ENCODE measurements at regions of chrX and their contacts with region 1.

Region 1: GRCh38 chrX:37825209-37825842 is 22.0 kb downstream of the DYNLT3 start:
- DNase-seq: peak; percentile 64
- H3K4me3 ChIP-seq: no peak overlapping the region
- H3K27ac ChIP-seq: no peak overlapping the region
- H3K4me1 ChIP-seq: peaks cover 0 to 6% (median 0%) of the 10 kb centered on the region in 4 donors
- H3K27me3 ChIP-seq: no peaks in the 10 kb centered on the region
- CTCF ChIP-seq: peak; percentile 66 to 83 (median 76)
- EP300 ChIP-seq: no peak
- POLR2A ChIP-seq: no peak

Region 2: GRCh38 chrX:37509349-37509748 is 316.0 kb before region 1 on chrX:
- intact Hi-C with region 1: loop called (anchors 1 kb)
- DNase-seq: no peak
- H3K4me3 ChIP-seq: no peak overlapping the region
- H3K27ac ChIP-seq: no peak overlapping the region
- H3K4me1 ChIP-seq: no peaks in the 10 kb centered on the region
- H3K27me3 ChIP-seq: no peaks in the 10 kb centered on the region
- CTCF ChIP-seq: peak in 2 of 4 experiments; percentile 12 to 38
- EP300 ChIP-seq: no peak
- POLR2A ChIP-seq: no peak

Region 3: GRCh38 chrX:37578045-37578444 is 247.3 kb before region 1 on chrX:
- intact Hi-C with region 1: loop called (anchors 2 kb)
- DNase-seq: no peak
- H3K4me3 ChIP-seq: no peak overlapping the region
- H3K27ac ChIP-seq: peak overlapping the region; percentile 33 to 68 (median 56)
- H3K4me1 ChIP-seq: no peaks in the 10 kb centered on the region
- H3K27me3 ChIP-seq: no peaks in the 10 kb centered on the region
- CTCF ChIP-seq: no peak
- EP300 ChIP-seq: no peak
- POLR2A ChIP-seq: no peak

Region 4: DNA sequence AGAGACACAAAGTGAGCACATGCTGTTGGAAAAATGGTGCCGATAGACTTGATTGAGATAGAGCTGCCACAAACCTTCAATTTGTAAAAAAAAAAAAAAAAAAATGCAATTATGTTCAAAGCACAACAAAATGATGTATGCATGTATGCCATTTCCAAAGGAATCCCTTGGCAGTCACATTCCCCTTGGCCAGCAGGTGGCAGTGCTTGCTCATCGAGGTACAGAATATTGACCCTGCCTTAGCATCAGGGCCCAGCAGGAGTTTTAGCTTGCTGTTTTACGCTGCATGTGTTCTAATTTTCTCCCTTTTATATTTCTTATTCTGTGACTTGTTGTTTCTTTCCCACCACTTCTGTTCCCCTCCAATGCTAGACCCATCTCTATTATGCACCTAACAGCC is 80.0 kb before region 1 on chrX:
- intact Hi-C with region 1: loop called (anchors 2 kb)
- DNase-seq: peak; percentile 76
- H3K4me3 ChIP-seq: no peak overlapping the region
- H3K27ac ChIP-seq: no peak overlapping the region
- H3K4me1 ChIP-seq: no peaks in the 10 kb centered on the region
- H3K27me3 ChIP-seq: no peaks in the 10 kb centered on the region
- CTCF ChIP-seq: peak; percentile 46 to 75 (median 56)
- EP300 ChIP-seq: no peak
- POLR2A ChIP-seq: no peak

Region 5: DNA sequence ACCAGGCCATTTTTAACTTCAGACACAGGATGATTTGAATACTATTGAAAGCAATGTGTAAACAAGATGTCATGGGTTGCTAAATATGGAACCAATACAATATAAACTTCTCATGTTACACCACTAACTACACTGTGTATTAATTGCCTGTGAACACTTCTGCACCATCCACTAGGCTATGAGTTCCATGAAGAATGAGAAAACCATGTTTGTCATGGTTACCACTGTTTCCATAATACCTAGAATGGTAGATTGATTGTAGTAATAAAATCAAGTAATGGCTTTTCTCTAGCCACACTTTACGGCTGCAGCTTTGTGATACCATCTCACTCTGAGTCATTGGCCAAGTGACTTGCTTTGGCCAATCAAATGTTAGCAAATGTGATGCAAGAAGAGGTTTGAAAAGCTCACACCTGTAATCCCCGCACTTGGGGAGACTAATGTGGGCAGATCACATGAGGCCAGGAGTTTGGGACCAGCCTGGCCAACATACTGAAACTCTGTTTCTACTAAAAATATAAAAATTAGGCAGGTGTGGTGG is 65.4 kb before region 1 on chrX:
- intact Hi-C with region 1: no loop called
- DNase-seq: no peak
- H3K4me3 ChIP-seq: no peak overlapping the region
- H3K27ac ChIP-seq: no peak overlapping the region
- H3K4me1 ChIP-seq: no peaks in the 10 kb centered on the region
- H3K27me3 ChIP-seq: no peaks in the 10 kb centered on the region
- CTCF ChIP-seq: no peak
- EP300 ChIP-seq: no peak
- POLR2A ChIP-seq: no peak

Region 6: GRCh38 chrX:38327007-38327774 is 501.9 kb after region 1 on chrX and contains the start of gene RPGR:
- intact Hi-C with region 1: no loop called
- DNase-seq: peak; percentile 97
- H3K4me3 ChIP-seq: peak within 1 kb of the TSS; percentile 48 to 68 (median 64)
- H3K27ac ChIP-seq: peak within 1 kb of the TSS; percentile 83 to 92 (median 86)
- H3K4me1 ChIP-seq: peaks cover 0 to 10% (median 0%) of the 10 kb centered on the region in 4 donors
- H3K27me3 ChIP-seq: peaks cover 0 to 3% (median 0%) of the 10 kb centered on the region in 3 donors
- CTCF ChIP-seq: peak; percentile 64 to 72 (median 67)
- EP300 ChIP-seq: no peak
- POLR2A ChIP-seq: no peak
- total RNA-seq, gene RPGR: 9.3 to 41.8 (median 17.6) TPM

Measured in sigmoid colon (tissue), 7 donors.